AG04449 (cell line): ENCODE measurements at regions of chr3 and their contacts with region 1.

Region 1: DNA sequence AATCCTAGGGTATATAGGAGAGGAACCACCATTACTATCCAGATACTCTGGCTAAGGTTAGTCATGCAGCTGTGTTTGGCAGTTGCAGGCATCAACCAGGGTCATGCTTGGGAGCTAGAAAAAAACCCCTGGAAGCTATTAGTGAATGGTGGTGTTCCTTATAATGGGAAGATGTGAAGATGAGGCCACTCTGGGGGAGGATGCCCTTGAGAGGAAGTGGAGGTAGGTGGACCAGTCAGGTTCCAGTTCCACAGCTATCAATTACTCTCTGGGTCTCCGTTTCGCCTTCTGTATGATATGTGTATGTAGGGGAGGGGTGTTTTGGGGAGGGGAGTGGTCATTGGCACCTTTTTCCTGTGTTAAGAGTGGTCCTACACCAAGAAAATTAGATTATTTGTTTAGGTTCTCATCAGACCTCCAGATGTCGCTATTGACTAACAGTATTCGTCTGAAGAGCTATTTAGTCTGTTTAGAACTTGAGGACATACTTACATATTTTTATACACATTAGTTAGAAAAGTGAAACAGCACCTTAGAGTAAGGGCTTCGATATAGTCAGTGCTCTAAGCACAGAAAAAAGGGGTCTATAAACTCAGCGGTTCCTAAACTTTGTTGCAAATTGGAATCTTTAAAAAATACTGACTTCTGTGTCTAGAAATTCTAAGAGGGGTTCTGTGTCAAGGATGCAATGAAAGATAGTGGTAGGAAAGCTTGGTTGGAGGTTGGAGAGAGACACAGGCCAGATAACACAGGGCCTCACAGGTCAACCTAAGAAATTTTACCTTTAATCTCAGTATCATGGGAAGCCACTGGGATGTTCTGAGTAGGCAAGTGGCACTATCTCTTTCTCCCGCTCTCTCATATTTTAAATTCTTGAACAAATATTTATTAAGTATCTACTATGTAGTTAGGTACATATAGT is 9.1 kb upstream of the HPS3 start:
- DNase-seq: no peak
- H3K4me3 ChIP-seq: no peak overlapping the region
- CTCF ChIP-seq: peak; percentile 38

Region 2: DNA sequence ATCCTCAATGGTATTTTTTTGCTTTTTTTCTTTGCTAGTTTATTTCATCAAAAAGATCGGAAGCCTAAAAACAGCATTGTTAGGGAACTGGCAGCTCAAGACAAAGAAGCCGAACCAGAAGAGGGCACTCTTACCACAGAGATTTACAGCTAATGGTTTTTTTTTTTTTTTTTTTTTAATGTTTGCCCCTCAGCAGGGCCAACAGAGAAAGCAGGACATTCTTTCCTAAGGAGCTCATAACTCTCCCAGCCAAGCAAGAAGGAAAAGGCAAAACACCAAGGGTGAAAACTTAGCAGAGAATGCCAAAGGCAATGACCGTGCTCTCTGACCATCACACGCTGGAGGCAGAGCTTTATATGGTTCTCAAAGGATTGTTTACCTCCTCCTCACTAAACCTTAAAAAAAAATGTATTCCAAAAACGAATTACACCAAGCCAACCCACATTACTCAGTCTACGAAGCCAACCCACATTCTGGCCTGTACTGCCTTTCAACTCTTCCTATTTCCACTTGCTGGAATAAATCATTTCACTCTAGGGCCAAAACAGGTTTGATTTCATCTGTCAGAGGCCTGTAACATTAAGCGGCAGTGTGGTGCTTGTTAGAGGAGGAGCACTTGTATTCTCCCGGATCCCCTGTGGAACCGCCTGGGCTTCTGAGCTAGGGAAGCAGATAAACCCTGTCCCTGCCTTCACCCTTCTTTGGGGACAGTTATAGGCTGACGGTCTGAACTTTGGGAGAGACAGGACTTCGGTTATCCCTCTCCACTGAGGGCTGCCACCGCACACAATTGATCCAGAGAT is 164.6 kb before region 1 on chr3:
- CTCF ChIA-PET with region 1: interaction called, 88 read pairs
- POLR2A ChIA-PET with region 1: no interaction called
- DNase-seq: peak; percentile 89
- H3K4me3 ChIP-seq: no peak overlapping the region
- CTCF ChIP-seq: peak; percentile 52

Region 3: GRCh38 chr3:149009732-149010131 is 110.6 kb before region 1 on chr3:
- CTCF ChIA-PET with region 1: no interaction called
- POLR2A ChIA-PET with region 1: no interaction called
- DNase-seq: no peak
- H3K4me3 ChIP-seq: no peak overlapping the region
- CTCF ChIP-seq: no peak

Region 4: DNA sequence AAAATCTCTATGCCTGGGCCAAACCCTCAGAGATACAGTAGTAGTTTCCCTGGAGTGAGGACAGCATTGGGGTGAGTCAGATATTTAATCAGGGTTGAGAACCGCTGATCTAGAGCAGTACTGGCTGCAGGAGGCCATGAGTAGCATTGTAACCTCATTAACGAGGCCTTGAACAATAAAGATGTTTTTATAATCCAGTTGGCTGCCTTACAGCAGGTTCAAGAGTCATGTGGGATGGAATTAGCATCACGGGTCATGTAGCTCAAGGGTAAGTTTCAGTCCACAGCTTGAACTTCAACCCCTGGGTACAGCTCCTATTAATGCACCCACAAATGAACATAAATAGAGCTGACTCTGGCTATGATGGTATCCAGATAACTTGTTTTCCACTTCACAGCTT is 14.3 kb after region 1 on chr3:
- CTCF ChIA-PET with region 1: interaction called, 37 read pairs
- POLR2A ChIA-PET with region 1: no interaction called
- DNase-seq: no peak
- H3K4me3 ChIP-seq: no peak overlapping the region
- CTCF ChIP-seq: no peak

Region 5: GRCh38 chr3:149203758-149204157 is 83.4 kb after region 1 on chr3:
- CTCF ChIA-PET with region 1: no interaction called
- POLR2A ChIA-PET with region 1: no interaction called
- DNase-seq: no peak
- H3K4me3 ChIP-seq: no peak overlapping the region
- CTCF ChIP-seq: no peak

Region 6: DNA sequence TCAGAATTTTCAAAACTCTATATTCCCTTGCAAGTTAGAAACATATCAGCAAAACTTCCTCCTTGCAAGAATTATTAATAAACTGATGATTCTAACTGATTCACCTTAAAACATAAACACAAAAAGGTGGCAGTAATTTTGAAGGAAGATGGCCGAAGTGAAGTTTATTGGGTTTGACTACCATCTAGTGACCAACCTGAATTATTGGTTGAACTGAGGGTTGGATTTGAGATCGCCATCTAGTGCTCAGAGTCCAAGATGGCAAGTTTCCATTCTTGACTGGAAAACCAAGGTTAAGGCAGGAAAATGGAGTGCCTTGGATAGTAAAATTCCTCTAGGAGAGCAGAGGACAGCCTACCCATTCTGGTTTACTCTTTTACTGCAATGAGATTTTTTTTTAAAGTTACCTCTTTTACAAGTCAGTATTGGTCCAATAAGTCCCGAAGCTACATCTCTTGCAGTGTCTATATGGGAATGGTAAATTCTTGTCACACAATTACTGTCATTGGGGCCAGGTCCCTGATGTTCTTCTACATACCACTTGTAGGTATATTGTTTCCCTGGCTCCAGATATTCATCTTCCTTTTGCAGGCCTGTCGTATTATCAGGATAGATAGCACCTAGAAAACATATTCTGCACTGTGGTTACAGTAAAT is 152.9 kb after region 1 on chr3:
- CTCF ChIA-PET with region 1: interaction called, 255 read pairs
- POLR2A ChIA-PET with region 1: no interaction called
- DNase-seq: peak; percentile 58
- H3K4me3 ChIP-seq: no peak overlapping the region
- CTCF ChIP-seq: peak; percentile 79

Region 7: DNA sequence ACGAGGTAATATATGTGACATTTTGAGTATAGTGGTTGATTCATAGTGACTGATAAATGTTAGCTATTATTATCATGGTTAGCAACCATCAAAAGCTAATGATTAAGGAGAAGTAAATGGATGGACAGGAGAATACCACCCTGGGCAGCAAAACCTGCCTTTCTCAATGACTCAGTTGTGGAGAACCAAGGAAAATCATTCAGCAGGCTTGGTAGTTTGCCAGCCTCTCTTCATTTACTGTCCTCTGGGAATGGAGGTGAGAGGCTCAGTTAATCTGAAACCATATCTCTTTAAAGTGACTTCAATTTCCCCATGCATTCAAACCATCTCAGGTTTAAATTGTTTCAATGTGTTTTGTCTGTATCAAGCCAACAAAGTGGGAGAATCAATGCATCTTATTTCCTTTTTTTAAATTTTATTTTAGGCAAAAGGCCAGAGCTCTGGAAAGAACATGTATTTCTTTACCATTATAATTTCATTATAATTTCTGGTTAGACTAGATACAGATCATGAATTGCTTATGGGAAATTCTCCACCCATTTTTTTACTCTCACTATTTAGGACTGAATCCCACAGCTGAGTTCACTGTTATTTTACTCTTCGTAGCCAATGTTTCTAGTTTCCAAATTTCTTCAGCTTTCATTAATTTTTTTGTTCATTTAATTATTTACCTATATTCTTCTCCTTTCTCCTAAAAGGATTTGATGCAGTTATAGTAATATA is 210.5 kb after region 1 on chr3:
- CTCF ChIA-PET with region 1: interaction called, 43 read pairs
- POLR2A ChIA-PET with region 1: no interaction called
- DNase-seq: no peak
- H3K4me3 ChIP-seq: no peak overlapping the region
- CTCF ChIP-seq: no peak

Region 8: GRCh38 chr3:149371001-149371722 is 250.8 kb after region 1 on chr3:
- CTCF ChIA-PET with region 1: interaction called, 11 read pairs
- POLR2A ChIA-PET with region 1: no interaction called
- DNase-seq: no peak
- H3K4me3 ChIP-seq: no peak overlapping the region
- CTCF ChIP-seq: no peak

Region 9: GRCh38 chr3:149480325-149481017 is 360.2 kb after region 1 on chr3:
- CTCF ChIA-PET with region 1: interaction called, 11 read pairs
- POLR2A ChIA-PET with region 1: no interaction called
- DNase-seq: peak; percentile 37
- H3K4me3 ChIP-seq: no peak overlapping the region
- CTCF ChIP-seq: peak; percentile 94

Region 10: DNA sequence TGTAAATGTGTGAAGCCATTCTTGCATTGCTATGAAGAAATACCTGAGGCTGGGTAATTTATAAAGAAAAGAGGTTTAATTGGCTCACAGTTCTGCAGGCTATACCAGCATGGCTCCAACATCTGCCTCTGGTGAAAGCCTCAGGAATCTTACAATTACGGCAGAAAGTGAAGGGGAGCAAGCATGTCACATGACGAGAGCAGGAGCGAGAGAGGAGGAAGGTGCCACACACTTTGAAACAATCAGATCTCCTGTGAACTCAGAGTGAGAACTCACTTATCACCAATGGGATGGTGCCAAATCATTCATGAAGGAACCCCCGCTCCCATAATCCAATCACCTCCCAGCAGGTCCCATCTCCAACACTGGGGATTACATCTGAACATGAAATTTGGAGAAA is 1074.2 kb after region 1 on chr3:
- CTCF ChIA-PET with region 1: no interaction called
- POLR2A ChIA-PET with region 1: no interaction called
- DNase-seq: no peak
- H3K4me3 ChIP-seq: no peak overlapping the region
- CTCF ChIP-seq: no peak